PC-3 (cell line): ENCODE measurements at regions of chr3 and their contacts with region 1.

Region 1: DNA sequence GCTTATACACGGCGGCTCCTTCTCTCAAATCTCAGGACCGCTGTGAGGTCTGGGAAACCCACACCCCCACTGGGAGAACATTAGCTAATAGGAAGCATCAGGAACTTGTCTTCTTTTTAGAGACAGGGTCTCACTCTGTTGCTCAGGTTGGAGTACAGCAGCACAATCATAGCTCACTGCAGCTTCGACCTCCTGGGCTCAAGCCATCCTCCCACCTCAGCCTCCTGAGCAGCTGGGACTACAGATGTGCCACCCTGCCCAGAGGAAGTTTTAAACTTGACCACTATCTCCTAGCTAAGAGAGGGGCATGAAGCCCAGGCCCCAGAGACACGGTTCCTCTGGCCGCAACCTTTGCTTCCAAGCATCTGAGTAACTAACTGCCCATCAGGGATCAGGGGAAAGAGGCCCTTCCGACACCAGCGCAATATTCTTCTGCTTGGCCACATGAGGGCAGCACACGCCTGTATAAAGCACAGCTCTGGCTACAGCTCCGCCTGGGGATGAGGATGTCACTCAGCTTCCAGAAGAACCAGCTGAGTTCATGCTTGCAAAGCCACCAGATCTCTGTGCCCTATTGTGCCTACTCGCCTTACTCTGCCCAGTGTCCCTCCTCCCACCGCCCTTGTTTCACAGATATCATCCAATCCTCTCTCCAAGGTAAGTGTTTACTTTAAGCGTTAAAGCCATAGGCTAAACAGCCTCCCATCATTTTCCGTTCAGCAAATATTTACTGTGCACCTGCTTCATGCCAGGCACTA is 57.5 kb upstream of the SLC6A11 start:
- DNase-seq: peak; percentile 84
- ATAC-seq: peak; percentile 90
- H3K4me3 ChIP-seq: no peak overlapping the region
- H3K27ac ChIP-seq: peak overlapping the region; percentile 92
- H3K4me1 ChIP-seq: peaks cover 28% of the 10 kb centered on the region
- H3K27me3 ChIP-seq: no peaks in the 10 kb centered on the region
- CTCF ChIP-seq: peak; percentile 82

Region 2: GRCh38 chr3:10419637-10420232 is 338.7 kb before region 1 on chr3:
- CTCF ChIA-PET with region 1: no interaction called
- POLR2A ChIA-PET with region 1: no interaction called
- intact Hi-C with region 1: no loop called
- DNase-seq: peak; percentile 46
- ATAC-seq: peak; percentile 45; the same call in 1 of the 2 replicates
- H3K4me3 ChIP-seq: no peak overlapping the region
- H3K27ac ChIP-seq: no peak overlapping the region
- H3K4me1 ChIP-seq: peaks cover 6% of the 10 kb centered on the region; the same call in 1 of the 2 replicates
- H3K27me3 ChIP-seq: peaks cover 24% of the 10 kb centered on the region
- CTCF ChIP-seq: no peak

Region 3: DNA sequence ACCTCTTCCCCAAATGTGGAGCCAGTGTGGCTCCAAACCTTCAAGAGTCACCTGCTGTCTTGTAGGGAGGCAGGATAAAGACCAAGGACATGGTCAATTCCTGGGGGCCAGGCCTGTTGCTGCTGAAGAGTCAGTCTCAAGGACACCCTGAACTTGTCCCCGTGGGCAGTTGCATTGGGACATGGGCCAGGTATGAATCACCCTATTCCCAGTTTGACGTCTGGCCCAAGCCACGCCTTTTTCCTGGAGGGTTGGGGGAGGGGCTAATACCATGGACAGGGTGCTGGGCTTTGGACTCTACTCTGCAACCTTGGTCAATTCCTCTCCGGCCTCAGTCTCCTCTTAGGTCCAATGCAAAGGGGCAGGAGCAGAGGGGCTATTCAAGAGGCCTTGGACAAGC is 263.5 kb before region 1 on chr3:
- CTCF ChIA-PET with region 1: no interaction called
- POLR2A ChIA-PET with region 1: no interaction called
- intact Hi-C with region 1: no loop called
- DNase-seq: peak; percentile 63
- ATAC-seq: peak; percentile 51
- H3K4me3 ChIP-seq: no peak overlapping the region
- H3K27ac ChIP-seq: no peak overlapping the region
- H3K4me1 ChIP-seq: no peaks in the 10 kb centered on the region
- H3K27me3 ChIP-seq: peaks cover 49% of the 10 kb centered on the region
- CTCF ChIP-seq: no peak

Region 4: DNA sequence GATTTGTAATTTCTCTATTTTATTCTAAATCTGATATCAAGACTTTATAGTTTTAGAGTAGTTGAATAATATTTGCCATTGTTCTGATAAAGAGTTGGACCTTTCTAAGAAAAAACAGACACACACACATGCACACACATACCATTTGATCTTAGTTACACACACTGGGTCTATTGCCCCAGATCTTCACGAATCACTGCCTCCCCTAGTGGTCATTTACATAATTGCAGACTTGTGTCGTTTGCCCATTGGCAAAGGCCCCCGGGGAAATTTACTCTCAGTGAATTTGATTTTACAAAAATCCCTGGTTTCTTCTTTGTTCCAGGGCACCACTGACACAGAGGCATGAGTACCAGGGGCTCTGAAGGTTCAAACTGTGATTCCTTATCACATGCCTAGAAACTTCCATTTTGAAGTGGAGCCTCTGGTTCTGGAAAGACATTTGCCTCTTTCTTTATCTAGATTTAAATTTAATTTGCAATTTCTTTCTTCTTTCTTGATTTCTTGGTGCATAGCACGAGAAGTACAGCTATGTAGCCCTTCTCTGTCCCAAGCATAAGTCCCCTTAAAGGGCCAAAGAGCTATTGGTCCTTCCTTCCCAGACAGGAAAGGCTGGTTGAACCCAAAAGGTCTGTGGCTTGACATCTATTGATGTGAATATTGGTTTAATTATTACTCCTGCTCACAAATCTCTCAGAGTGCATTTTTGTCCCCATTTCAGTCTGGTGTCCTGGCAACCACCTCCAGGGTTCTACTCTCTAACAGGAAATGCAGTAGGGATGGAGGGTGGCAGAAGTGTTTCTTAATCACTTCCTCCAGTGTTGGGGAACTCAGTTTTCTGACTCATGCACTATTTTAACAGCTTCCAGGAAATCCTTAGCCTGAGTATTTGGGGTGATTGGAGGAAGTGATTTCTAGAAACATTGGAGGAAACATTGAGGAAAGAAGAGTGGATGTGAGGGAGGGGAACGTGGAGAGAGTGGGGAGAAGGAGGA is 25.2 kb after region 1 on chr3:
- CTCF ChIA-PET with region 1: no interaction called
- POLR2A ChIA-PET with region 1: interaction called, 4 read pairs
- intact Hi-C with region 1: loop called (anchors 1 kb)
- DNase-seq: peak; percentile 78
- ATAC-seq: peak; percentile 18; the same call in 1 of the 2 replicates
- H3K4me3 ChIP-seq: no peak overlapping the region
- H3K27ac ChIP-seq: no peak overlapping the region
- H3K4me1 ChIP-seq: peaks cover 46% of the 10 kb centered on the region
- H3K27me3 ChIP-seq: no peaks in the 10 kb centered on the region
- CTCF ChIP-seq: peak; percentile 92

Region 5: DNA sequence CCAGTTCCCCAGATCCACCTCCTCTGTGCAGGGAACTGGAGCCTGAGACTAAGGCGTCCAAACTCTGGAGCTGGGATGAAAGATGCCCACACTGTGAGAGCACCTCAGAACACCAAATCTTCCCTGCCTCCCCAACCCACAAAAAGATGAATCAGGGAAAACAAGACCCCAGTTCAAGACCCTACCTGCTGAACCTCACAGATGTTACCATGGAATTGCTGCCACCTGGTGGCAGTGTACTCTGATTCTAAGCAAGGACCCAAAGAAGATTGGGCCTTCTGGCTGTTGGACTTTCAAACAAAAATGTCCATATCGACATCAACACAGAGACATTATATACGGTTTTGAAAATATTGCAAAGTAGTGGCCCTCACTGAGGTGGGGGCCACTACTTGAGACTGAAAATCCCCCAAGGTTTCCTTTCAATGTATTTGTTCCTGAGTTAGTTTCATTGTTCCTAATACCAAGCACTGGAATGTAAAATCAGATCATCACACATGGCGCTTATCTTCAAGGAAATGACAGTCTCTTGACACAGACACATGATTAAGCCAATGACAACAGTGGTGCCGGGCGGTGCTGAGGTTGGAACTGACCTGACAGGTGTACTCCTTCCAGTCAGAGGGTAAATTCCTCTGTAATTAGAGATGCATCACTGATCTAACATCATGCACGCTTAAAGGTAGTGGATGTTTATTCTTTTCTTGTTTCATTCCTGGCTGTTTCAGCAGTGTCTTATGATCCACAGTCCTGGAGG is 125.2 kb after region 1 on chr3:
- CTCF ChIA-PET with region 1: no interaction called
- POLR2A ChIA-PET with region 1: no interaction called
- intact Hi-C with region 1: loop called (anchors 1 kb)
- DNase-seq: peak; percentile 70
- ATAC-seq: peak; percentile 66
- H3K4me3 ChIP-seq: no peak overlapping the region
- H3K27ac ChIP-seq: no peak overlapping the region
- H3K4me1 ChIP-seq: peaks cover 19% of the 10 kb centered on the region
- H3K27me3 ChIP-seq: no peaks in the 10 kb centered on the region
- CTCF ChIP-seq: peak; percentile 91

Region 6: DNA sequence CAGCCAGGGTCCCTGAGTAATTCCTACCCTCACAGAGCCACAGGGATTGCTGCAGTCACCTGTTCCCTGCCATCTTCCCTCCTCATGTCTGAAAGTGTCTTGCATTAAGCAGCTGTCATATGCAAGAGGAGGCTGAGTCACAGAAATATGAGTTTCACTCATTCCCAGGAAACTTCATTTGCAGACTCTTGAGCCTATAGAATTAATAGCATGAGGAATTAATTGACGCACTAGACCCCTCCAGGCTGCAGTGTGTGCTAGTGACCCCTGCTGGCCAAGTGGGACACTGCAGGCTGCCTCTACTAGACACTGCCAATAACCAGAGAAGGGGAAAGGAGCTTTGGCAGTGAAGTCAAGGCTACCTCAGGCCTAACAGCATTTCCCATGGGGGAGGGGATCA is 183.5 kb after region 1 on chr3:
- CTCF ChIA-PET with region 1: interaction called, 8 read pairs
- POLR2A ChIA-PET with region 1: no interaction called
- intact Hi-C with region 1: loop called (anchors 1 kb)
- DNase-seq: peak; percentile 68
- ATAC-seq: peak; percentile 30; the same call in 1 of the 2 replicates
- H3K4me3 ChIP-seq: no peak overlapping the region
- H3K27ac ChIP-seq: no peak overlapping the region
- H3K4me1 ChIP-seq: no peaks in the 10 kb centered on the region
- H3K27me3 ChIP-seq: 0 out of 2 replicates have a peak, but pooled peaks cover 3% of the 10 kb centered on the region
- CTCF ChIP-seq: peak; percentile 97

Region 7: GRCh38 chr3:10983219-10983916 is 224.9 kb after region 1 on chr3:
- CTCF ChIA-PET with region 1: no interaction called
- POLR2A ChIA-PET with region 1: no interaction called
- intact Hi-C with region 1: loop called (anchors 1 kb)
- DNase-seq: peak; percentile 79
- ATAC-seq: peak; percentile 91
- H3K4me3 ChIP-seq: 0 out of 2 replicates have a peak overlapping the region, but pooled peaks have one; percentile 33
- H3K27ac ChIP-seq: no peak overlapping the region
- H3K4me1 ChIP-seq: peaks cover 16% of the 10 kb centered on the region
- H3K27me3 ChIP-seq: peaks cover 36% of the 10 kb centered on the region
- CTCF ChIP-seq: peak; percentile 95

Region 8: GRCh38 chr3:11060500-11061251 is 302.2 kb after region 1 on chr3:
- CTCF ChIA-PET with region 1: interaction called, 3 read pairs
- POLR2A ChIA-PET with region 1: no interaction called
- intact Hi-C with region 1: loop called (anchors 1 kb)
- DNase-seq: peak; percentile 83
- ATAC-seq: peak; percentile 80
- H3K4me3 ChIP-seq: peak overlapping the region; percentile 44
- H3K27ac ChIP-seq: no peak overlapping the region
- H3K4me1 ChIP-seq: no peaks in the 10 kb centered on the region
- H3K27me3 ChIP-seq: no peaks in the 10 kb centered on the region
- CTCF ChIP-seq: peak; percentile 96

Region 9: DNA sequence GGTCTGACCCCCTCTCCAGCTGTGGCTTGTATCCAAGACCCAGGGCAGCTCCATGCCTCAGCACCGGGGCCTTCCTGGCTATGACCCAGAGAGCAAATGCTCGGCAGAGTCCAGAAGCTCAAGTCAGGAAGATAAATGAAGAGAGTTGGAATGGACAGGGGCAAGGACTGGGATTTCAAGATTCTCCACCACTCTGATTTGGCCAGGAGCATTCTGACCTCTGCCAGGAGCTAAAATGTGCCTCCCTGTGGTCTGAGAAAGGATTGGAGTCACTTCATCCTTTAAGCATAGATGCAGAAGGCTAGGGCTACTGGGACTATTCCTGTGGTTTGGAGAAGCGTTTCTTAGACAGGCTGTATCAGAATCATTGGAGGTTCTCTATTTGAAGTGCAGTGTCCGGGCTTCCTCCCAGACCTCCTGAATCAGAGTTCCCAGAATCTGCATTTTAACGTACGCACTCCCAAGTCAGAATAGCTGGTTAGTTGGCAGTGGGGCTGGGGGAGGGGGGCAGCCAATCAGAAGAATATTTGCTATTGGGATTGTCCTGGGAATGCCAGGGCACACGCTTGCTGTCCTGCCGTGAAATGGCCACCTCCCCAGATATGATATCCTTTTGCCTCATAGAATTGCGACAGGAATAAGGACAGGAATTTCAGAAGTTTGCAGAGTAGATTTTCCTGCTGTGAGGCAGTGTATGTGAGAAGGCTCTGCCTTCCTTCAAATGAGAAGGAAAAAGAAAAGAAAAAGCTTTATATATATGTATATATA is 453.2 kb after region 1 on chr3:
- CTCF ChIA-PET with region 1: no interaction called
- POLR2A ChIA-PET with region 1: no interaction called
- intact Hi-C with region 1: loop called (anchors 10 kb)
- DNase-seq: no peak
- ATAC-seq: peak; percentile 37; the same call in 1 of the 2 replicates
- H3K4me3 ChIP-seq: no peak overlapping the region
- H3K27ac ChIP-seq: no peak overlapping the region
- H3K4me1 ChIP-seq: peaks cover 20% of the 10 kb centered on the region
- H3K27me3 ChIP-seq: no peaks in the 10 kb centered on the region
- CTCF ChIP-seq: peak; percentile 20; the same call in 1 of the 2 replicates